ENCODE measurements at regions of chr19 and their contacts with region 1.

Region 1: DNA sequence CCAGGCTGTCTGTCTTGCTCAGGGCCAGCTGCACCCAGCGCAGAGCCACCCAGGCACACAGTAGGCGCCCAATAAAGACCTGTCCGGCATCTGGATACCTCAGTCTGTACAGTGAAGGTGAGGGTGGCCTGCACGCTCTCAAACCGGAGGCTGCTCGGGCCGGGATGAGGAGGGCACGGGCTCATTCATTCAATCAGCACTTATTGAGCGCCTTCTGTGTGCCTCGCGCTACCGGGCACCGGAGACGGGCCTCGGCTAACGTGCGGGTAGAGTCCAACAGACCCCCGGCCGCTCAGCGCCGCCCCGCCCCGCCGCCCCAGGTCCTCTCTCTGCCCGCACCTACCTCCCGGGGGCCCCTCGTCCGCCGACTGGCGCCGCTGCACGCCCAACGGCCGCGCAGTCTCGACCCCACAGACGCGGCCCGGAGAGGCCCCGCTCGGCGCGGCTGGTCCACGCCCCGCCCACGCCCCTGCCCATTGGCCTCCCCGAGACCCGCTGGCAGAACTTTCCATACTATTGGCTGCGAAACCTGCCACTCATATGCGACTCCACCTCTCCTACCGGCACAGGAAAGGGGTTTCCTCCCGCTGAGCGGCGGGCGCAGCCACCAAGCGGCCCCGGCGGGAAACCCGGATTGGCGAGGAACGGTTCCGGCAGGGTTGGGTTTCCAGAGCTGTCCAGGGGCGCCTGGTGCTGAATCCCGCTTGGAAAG is at the start of gene SLC39A3:
- DNase-seq: peak; percentile 98 to 100 (median 100)
- ATAC-seq: peak; percentile 100
- H3K4me3 ChIP-seq: peak within 1 kb of the TSS; percentile 82 to 99 (median 92)
- H3K27ac ChIP-seq: peak within 1 kb of the TSS in 11 of 12 donors; percentile 35 to 80 (median 60)
- H3K4me1 ChIP-seq: peaks cover 0 to 18% (median 9%) of the 10 kb centered on the region in 12 donors
- H3K27me3 ChIP-seq: no peaks in the 10 kb centered on the region
- CTCF ChIP-seq: peak in 6 of 12 donors; percentile 8 to 33 (median 18)
- POLR2A ChIP-seq: peak in 1 of 2 donors; percentile 50
- total RNA-seq, gene SLC39A3: 16.4 to 33.3 (median 21.7) TPM

Region 2: GRCh38 chr19:2653710-2654707 is 85.7 kb before region 1 on chr19:
- intact Hi-C with region 1: loop called in 1 of 10 experiments (anchors 5 kb)
- DNase-seq: no peak
- ATAC-seq: peak in 3 of 4 donors; percentile 25 to 63 (median 62)
- H3K4me3 ChIP-seq: no peak overlapping the region
- H3K27ac ChIP-seq: no peak overlapping the region
- H3K4me1 ChIP-seq: peaks cover 0 to 7% (median 0%) of the 10 kb centered on the region in 12 donors
- H3K27me3 ChIP-seq: peaks cover 0 to 2% (median 0%) of the 10 kb centered on the region in 9 donors
- CTCF ChIP-seq: no peak
- POLR2A ChIP-seq: no peak